AG04449 (cell line): ENCODE measurements at regions of chr6 and their contacts with region 1.

Region 1: DNA sequence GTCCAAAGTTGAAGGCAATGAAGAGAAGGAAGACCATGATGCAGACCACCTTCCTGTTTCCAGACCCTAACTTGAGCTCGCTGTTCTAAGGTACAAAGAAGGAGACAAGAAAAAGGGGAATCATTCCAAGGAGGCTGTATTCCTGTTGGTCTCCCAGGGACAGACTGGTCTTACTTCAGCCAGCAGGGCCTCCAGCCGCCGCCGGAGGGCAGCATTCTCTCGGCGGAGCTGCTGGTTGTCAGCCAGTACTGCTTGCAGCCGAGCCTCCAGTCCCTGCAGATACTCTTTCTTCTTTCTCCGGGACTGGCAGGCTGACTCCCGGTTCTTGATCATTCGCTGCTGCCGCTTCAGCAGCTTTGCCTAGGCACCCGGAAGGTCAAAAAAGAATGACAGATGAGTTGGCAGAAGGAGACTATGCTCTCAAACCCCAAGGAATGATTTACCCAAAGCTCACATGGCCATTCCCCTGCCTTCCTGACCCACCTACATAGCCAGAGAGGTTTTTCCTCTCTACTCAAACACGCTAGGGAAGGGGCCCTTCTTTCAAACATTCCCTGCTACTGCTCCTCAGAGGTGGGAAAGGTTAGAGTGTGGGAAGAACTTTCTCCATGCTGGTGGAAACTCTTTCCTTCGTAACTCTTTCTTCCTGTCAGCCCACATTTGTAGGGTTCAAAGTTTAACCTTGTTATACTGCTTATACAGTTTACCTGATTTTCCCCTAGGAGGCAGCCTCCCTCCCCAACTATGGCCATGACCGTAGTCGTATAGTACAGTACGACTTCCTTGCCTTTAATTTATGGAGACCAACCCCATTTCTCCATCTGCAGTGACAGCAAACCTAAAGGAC is 9.0 kb downstream of the ATF6B start:
- DNase-seq: no peak
- H3K4me3 ChIP-seq: no peak overlapping the region
- CTCF ChIP-seq: peak; percentile 97

Region 2: DNA sequence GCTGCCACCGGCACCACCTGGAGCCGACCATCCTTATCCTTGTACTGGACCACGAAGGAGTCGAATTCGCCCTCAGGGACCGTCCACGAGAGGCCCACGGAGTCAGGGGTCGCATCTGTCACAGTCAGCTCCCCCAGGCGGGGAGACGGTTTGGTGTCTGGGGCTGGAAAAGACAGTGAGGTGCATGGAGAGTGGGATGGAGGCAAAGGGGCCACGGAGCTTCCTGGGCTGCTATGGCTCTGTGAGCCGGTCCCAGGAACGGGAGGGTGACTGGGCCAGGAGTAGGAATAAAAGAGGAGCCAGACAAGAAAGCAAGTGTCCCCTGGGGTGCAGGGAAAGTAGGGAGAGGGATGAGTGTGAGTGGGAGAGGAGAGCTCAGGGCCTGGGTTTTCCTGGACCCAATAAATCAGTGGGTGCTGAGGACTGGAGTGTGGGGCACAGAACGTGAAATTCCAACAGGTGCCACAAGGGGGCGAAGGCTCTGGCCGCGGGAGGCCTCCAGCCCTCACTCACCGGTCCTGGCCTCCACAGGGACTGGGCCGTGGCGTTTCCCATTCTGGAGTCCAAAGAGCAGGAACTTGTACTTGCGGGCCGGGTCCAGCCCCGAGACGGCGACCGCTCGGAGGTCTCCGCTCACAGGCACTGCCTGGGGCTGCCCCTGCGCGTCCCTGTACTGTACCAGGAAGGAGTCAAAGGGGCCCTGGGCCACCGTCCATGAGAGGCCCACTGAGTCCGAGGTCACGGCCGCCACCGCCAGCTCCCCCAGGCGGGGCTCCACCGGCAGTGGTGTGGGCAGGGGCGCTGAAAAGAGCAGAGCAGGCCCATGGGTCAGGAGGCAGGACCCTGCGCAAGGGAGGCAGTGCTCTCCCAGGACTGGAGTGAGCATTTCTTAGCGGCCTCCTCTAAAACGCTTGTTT is 70.9 kb before region 1 on chr6:
- CTCF ChIA-PET with region 1: interaction called, 37 read pairs
- POLR2A ChIA-PET with region 1: no interaction called
- DNase-seq: no peak
- H3K4me3 ChIP-seq: no peak overlapping the region
- CTCF ChIP-seq: peak; percentile 88

Region 3: GRCh38 chr6:32097364-32097763 is 21.6 kb before region 1 on chr6:
- CTCF ChIA-PET with region 1: interaction called, 66 read pairs
- POLR2A ChIA-PET with region 1: interaction called, 4 read pairs
- DNase-seq: no peak
- H3K4me3 ChIP-seq: no peak overlapping the region
- CTCF ChIP-seq: no peak

Region 4: DNA sequence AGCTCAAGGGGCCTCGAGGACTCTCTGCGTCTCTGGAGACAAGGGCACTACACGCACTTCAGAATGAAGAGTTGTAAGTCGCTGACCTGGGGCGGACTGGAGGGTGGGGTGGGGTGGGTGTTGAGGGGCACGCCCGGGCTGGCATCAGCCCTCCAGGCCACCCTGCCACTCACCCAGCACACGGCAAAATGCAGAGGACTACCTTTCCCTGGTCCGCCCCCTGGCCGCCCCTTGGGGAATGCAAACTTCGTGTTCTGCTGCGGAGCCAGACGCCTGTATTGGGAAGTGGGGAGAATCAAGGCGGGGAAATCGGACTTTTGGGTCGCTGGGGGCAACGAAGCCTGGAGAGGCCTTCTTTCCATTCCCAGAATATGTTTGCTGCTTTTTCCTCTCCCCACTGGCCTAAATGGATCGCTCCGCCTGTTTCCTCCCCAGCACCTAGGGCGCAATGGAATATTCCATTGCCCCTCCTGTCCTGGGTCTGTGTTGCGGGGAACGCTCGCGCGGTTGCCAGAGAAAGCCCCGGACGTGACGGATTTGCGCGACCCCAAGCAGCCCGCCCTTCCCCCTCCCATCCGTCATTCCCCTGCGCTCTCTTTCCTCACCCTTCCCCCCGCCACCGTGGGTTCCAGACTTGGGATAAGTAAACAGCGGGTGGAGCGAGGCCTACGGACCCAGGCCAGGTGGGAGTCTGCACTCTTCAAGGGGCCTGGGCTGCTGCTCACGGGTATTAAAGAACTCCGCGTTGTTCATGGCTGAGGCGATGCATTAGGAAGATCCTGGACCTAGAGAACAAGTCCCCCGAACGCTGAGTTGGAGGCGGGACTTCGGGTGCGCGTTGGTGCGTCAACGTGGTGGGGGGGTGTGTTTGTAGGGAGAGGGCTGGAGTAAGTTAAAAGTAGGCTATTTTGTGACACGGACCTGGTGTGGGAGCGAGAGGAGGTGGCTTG is 34.8 kb after region 1 on chr6 and contains the start of gene PPT2:
- CTCF ChIA-PET with region 1: interaction called, 32 read pairs
- POLR2A ChIA-PET with region 1: no interaction called
- DNase-seq: peak; percentile 54
- H3K4me3 ChIP-seq: peak within 1 kb of the TSS; percentile 90
- CTCF ChIP-seq: peak; percentile 14

Region 5: DNA sequence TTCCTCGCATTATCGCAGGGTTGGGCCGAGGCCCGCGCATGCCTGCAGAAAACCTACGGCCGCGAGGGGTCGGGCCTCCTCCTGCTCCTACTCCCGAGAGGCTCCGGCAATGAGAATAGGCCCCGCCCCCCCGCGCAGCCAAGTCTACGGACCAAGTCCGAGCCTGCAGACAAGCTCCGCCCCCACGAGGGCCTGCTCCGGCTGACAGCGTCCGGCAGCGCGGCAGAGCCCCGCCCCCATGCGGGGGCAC is 76.6 kb after region 1 on chr6:
- CTCF ChIA-PET with region 1: interaction called, 62 read pairs
- POLR2A ChIA-PET with region 1: interaction called, 4 read pairs
- DNase-seq: peak; percentile 97
- H3K4me3 ChIP-seq: peak overlapping the region; percentile 94
- CTCF ChIP-seq: peak; percentile 43

Region 6: DNA sequence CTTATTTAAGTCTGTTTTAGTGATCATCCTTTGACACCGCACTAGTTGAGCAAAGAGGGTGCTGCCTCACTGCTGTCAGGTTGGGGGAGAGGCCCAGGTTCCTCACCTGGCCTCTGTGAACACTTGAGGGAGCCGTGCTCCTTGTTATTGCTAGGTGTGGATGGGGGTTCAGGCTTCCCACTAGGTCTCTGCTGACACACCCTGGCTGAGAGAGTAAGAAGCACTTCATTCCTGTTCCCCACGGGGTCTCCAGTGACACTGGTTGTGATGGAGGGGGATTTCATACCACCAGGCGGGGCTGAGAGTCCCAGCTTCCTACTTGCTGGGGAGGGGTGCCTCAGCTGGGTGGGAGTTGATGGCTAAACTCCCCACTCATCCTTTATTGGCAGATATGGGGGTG is 115.9 kb after region 1 on chr6:
- CTCF ChIA-PET with region 1: no interaction called
- POLR2A ChIA-PET with region 1: no interaction called
- DNase-seq: no peak
- H3K4me3 ChIP-seq: no peak overlapping the region
- CTCF ChIP-seq: no peak

Region 7: DNA sequence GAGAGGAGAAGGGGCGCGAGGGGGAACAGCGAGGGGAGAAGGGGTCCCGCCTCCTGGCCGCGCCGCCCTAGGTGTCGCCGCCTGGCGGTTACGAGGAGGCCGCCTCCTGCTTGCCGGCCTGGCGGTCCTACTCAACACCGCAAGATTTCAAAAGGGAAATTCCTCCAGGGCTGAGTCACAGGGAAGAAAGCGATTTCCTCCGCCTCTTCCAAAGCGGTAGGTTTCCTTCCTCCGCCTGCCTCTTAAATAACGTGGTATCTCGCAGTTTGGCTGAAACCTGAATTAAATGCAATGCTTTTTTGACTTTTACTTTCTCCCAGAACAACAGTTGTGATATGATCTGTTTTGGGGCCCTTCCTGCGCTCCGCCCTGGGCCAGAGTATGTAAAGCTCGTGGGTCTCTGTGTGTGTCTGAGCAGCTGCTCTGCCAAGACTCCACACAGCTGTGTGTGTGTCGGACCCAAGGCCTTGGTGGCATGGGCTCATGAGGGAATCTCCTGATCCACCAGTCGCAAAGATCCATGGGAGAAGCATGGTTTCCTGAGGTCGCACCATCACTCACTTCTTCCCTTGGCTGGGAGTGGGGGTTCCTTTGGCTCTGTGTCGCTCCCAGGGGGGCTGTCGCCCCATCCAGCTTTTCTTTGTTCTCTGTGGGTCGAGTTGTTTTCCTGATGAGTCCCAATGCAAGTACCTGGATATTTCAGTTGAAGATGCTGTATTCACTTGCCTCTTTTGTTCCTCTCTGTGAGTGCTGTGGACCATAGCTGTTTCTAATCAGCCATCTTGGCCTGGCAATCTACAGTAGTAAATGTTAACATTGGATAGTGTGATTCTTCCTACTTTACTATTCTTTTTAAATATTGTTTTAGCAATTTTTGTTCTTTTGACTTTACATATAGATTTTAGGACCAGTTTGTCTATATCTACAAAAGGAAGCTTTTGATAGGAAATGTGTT is 136.5 kb after region 1 on chr6:
- CTCF ChIA-PET with region 1: interaction called, 12 read pairs
- POLR2A ChIA-PET with region 1: no interaction called
- DNase-seq: peak; percentile 59
- H3K4me3 ChIP-seq: peak overlapping the region; percentile 53
- CTCF ChIP-seq: peak; percentile 89

Region 8: GRCh38 chr6:32355018-32355417 is 236.0 kb after region 1 on chr6:
- CTCF ChIA-PET with region 1: no interaction called
- POLR2A ChIA-PET with region 1: no interaction called
- DNase-seq: no peak
- H3K4me3 ChIP-seq: no peak overlapping the region
- CTCF ChIP-seq: no peak